HepG2 (cell line): ENCODE measurements at regions of chr19 and their contacts with region 1.

Region 1: DNA sequence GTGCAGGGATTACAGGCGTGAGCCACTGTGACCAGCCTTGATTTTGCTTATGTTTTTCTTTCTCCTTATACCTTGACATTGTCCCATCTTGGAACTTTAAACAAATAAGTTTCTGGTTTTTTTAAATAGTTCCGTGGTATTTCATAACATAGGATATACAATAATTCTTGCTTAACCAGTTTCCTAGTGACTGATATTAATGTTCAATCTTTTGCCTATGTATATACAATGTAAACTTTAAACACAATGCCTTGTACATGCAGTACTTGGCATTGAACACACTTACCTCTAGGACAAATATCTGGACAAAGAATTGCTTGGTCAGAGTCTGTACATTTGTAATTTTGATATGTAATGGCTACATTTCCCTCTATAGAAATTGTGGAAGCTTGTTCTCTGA is 24.4 kb upstream of the SPACA4 start:
- DNase-seq: no peak
- ATAC-seq: no peak
- H3K4me3 ChIP-seq: no peak overlapping the region
- H3K27ac ChIP-seq: no peak overlapping the region
- H3K4me1 ChIP-seq: peaks cover 11% of the 10 kb centered on the region
- H3K27me3 ChIP-seq: no peaks in the 10 kb centered on the region; a peak in 1 of 5 replicates
- CTCF ChIP-seq: no peak
- EP300 ChIP-seq: no peak
- POLR2A ChIP-seq: no peak
- RAD21 ChIP-seq: no peak

Region 2: DNA sequence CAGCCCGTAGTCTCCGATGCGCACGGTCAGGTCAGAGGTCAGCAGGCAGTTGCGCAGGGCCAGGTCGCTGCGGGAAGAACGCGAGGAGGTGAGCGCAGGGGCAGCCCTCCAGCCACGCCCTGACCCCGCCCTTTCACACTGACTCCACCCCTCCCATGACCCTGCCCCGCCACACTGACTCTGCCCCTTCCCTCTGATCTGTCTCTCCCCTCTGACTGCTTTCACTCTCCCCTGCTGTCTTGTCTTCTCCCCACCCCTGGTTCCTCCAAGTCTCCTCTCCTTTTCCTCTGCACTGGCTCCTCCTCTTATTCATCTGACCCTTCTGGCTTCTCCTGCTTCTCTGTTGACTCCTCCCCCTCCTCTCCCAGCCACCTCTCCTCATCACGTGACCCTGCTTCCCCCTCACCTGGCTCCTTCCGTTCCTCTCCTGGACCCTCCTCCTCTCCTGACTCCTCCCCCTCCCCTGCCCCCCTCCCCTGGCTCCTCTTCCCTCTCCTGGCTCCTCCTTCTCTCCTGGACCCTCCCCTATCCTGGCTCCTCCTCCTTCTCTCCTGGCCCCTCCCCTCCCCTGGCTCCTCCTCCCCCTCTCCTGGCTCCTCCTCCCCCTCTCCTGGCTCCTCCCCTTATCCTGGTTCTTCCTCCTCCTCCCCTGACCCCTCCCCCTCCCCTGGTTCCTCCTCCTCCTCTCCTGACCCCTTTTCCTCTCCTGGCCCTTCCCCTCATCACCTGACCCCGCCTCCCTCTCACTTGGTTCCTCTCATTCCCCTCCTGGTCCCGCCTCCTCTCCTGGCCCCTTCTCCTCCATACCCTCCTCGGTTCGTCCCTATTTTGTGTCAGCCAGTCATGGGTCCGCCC is 80.4 kb before region 1 on chr19:
- CTCF ChIA-PET with region 1: interaction called, 61 read pairs
- POLR2A ChIA-PET with region 1: interaction called, 6 read pairs
- in situ Hi-C with region 1: loop called (anchors 5 kb)
- intact Hi-C with region 1: loop called (anchors 1 kb)
- DNase-seq: peak; percentile 86
- ATAC-seq: peak; percentile 64
- H3K4me3 ChIP-seq: peak overlapping the region; percentile 58 to 85 (median 60)
- H3K27ac ChIP-seq: no peak overlapping the region
- H3K4me1 ChIP-seq: peaks cover 47% of the 10 kb centered on the region
- H3K27me3 ChIP-seq: peaks cover 0 to 9% of the 10 kb centered on the region in 2 experiments; a peak in 1 of 5 replicates
- CTCF ChIP-seq: 0 out of 2 replicates have a peak, but pooled peaks have one; percentile 1
- EP300 ChIP-seq: no peak
- POLR2A ChIP-seq: peak in 1 of 2 experiments; percentile 55; a peak in 1 of 4 replicates
- RAD21 ChIP-seq: no peak

Region 3: GRCh38 chr19:48543121-48544056 is 38.8 kb before region 1 on chr19:
- CTCF ChIA-PET with region 1: no interaction called
- POLR2A ChIA-PET with region 1: no interaction called
- in situ Hi-C with region 1: no loop called
- intact Hi-C with region 1: no loop called
- DNase-seq: no peak
- ATAC-seq: no peak
- H3K4me3 ChIP-seq: no peak overlapping the region
- H3K27ac ChIP-seq: no peak overlapping the region
- H3K4me1 ChIP-seq: peaks cover 10% of the 10 kb centered on the region; the same call in 1 of the 2 replicates
- H3K27me3 ChIP-seq: 0 out of 5 replicates have a peak, but pooled peaks cover 0 to 2% of the 10 kb centered on the region in 2 experiments
- CTCF ChIP-seq: no peak
- EP300 ChIP-seq: no peak
- POLR2A ChIP-seq: no peak
- RAD21 ChIP-seq: no peak